ENCODE measurements at regions of chr1 and their contacts with region 1.

Region 1: GRCh38 chr1:9874959-9875635 is 35.0 kb downstream of the CTNNBIP1 start:
- DNase-seq: peak; percentile 56 to 96 (median 78)

Region 2: DNA sequence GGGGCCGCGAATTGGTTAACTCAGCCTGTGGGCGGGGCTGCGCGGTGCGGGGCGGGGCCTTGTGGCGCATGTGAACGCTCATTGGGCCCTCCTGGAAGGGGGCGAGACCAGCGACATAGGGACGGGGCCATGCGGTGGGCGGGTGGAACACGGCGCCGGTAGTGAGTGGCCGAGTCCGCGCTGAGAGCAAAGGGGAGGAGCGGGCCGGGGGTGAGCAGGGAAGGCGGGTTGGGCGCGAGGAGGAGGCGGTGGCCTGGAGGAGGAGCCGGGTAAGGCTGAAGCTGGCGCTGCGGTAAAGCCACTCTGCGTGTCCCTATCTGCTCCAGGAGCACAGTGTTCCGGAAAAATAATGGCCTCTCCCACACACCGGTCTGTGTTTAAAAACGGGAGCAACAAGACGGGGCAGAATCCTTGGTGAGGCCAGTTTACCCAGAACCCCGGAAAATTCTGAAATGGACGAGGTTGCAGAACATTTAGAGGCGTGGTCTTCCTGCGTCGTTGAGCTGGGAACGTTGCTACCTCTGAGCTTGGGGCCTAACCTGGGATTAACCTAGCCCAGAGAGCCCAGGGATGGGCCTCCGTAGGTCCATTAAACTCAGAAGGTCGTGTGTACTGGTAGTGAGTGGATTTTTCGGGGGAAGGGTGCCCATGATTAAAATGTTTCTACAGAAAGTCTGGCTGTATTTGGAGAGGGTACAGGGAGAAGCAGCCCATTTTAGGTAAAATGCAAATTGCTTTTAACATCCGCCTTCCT is 35.5 kb after region 1 on chr1:
- intact Hi-C with region 1: loop called (anchors 1 kb)
- DNase-seq: peak; percentile 99 to 100 (median 100)

Region 3: DNA sequence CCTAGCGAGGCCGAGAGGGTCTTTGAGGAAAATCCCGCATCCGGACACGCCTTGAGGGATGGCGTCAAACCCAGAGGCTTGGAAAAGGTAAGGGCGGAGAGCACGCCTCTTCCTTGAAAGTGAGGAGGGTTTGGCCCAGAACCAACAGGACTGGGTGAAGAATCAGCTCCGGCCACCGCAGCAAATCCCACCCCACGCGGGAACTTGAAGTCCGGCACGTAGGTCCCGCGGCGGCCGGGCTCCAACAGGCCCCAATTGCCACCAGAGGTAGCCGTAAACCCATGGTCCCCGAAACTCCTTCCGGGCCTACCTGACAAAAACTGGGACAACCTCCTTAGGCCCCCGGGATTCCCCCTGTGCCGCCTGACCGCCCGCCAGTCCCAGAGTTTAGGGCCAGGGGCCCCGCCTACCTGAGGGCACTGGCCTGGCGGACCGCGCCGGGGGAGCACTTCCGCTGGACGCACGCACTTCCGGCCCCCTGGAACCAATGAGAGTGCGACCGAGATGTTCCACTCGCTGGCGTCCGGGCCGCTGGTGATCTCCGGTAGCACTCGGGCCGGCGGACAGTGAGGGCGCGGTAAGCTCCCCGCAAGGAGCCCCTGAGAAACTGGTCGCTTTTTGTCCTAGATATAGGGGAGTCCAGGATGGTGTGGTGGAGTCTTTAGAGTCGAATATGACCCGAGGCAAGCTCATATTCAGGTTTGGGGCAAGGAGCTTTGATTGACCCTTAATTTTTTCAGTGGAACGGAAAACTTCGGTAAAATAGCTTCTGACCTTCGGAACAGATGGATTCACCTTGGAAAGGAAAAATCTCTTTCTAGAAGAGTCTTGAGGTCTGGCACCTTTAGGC is 68.1 kb after region 1 on chr1 and contains the starts of genes LZIC and NMNAT1:
- intact Hi-C with region 1: loop called (anchors 1 kb)
- DNase-seq: peak; percentile 89 to 99 (median 93)

Region 4: DNA sequence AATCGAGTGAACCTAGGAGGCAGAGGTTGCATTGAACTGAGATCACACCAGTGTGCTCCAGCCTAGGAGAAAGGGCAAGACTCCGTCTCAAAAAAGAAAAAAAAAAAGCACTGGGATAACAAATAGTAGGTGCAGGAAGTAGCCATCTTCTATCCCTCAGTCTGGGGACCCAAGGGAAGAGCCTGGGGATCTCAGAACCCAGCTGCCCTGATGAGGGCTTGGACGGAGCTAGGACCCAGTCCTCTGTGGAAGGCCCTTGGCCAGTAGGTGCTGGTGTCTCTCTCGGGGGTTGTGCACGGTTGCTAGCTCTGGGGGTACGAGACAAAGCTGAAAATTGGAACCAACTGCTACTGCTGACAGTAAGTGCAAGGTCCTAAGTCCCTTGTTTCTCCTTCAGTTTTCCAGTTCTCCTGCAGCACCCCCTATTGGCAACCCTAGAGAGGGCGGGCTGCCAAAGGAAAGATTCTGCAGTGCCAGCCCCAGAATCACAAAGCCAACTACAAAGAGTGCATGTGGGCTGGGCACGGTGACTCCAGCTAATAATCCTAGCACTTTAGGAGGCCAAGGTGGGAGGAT is 277.7 kb after region 1 on chr1:
- intact Hi-C with region 1: loop called (anchors 2 kb)
- DNase-seq: peak; percentile 33 to 96 (median 80)